Caco-2 (cell line): ENCODE measurements at regions of chr16 and their contacts with region 1.

Region 1: DNA sequence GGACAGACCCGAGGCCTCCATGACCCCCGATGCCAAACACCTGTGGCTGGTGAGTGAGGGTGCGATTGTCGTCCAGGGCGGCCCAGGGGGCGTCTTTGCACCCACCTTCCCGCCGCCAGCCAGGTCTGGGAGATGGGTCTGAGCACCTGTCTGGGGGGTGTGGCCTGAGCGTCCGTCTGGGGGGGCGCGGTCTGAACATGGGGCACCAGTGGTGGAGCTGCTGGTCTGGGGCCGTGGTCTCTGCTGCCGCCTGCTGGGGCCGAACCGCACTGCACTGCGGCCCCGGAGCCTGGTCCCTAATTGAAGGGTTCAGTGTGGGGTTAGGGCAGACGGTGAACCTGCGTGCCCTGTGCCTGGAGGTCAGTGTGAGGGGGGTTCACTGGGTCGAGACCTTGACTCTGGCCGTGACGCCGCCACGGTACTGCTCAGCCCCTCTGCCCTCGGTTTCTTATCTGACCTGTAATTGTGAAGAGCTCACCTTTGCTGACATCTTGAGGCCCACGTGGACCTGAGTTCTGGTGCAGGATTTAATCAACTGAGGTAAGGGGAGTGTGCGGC is 12.6 kb upstream of the TCF25 start:
- DNase-seq: peak; percentile 88 to 91
- H3K4me3 ChIP-seq: no peak overlapping the region
- H3K4me3 Mint-ChIP-seq: no peak overlapping the region
- H3K27ac Mint-ChIP-seq: peak overlapping the region; percentile 82
- H3K4me1 ChIP-seq: peaks cover 3% of the 10 kb centered on the region; the same call in 1 of the 2 replicates
- H3K4me1 Mint-ChIP-seq: peaks cover 21% of the 10 kb centered on the region
- H3K27me3 ChIP-seq: no peaks in the 10 kb centered on the region
- H3K27me3 Mint-ChIP-seq: no peaks in the 10 kb centered on the region
- CTCF ChIP-seq: peak; percentile 99

Region 2: GRCh38 chr16:89749647-89750046 is 111.2 kb before region 1 on chr16:
- CTCF ChIA-PET with region 1: interaction called, 4 read pairs
- POLR2A ChIA-PET with region 1: no interaction called
- intact Hi-C with region 1: loop called (anchors 2 kb)
- DNase-seq: no peak
- H3K4me3 ChIP-seq: no peak overlapping the region
- H3K4me3 Mint-ChIP-seq: no peak overlapping the region
- H3K27ac Mint-ChIP-seq: peak overlapping the region; percentile 73
- H3K4me1 ChIP-seq: no peaks in the 10 kb centered on the region
- H3K4me1 Mint-ChIP-seq: no peaks in the 10 kb centered on the region
- H3K27me3 ChIP-seq: no peaks in the 10 kb centered on the region
- H3K27me3 Mint-ChIP-seq: no peaks in the 10 kb centered on the region
- CTCF ChIP-seq: no peak

Region 3: GRCh38 chr16:89793955-89794354 is 66.9 kb before region 1 on chr16:
- CTCF ChIA-PET with region 1: interaction called, 7 read pairs
- POLR2A ChIA-PET with region 1: no interaction called
- intact Hi-C with region 1: loop called (anchors 1 kb)
- DNase-seq: no peak
- H3K4me3 ChIP-seq: no peak overlapping the region
- H3K4me3 Mint-ChIP-seq: no peak overlapping the region
- H3K27ac Mint-ChIP-seq: no peak overlapping the region
- H3K4me1 ChIP-seq: no peaks in the 10 kb centered on the region
- H3K4me1 Mint-ChIP-seq: no peaks in the 10 kb centered on the region
- H3K27me3 ChIP-seq: no peaks in the 10 kb centered on the region
- H3K27me3 Mint-ChIP-seq: no peaks in the 10 kb centered on the region
- CTCF ChIP-seq: no peak

Region 4: GRCh38 chr16:89815639-89816348 is 45.0 kb before region 1 on chr16:
- CTCF ChIA-PET with region 1: interaction called, 13 read pairs
- POLR2A ChIA-PET with region 1: no interaction called
- intact Hi-C with region 1: no loop called
- DNase-seq: peak in 1 of 2 experiments; percentile 46
- H3K4me3 ChIP-seq: peak overlapping the region; percentile 55
- H3K4me3 Mint-ChIP-seq: peak overlapping the region; percentile 78
- H3K27ac Mint-ChIP-seq: no peak overlapping the region
- H3K4me1 ChIP-seq: peaks cover 27% of the 10 kb centered on the region
- H3K4me1 Mint-ChIP-seq: peaks cover 19% of the 10 kb centered on the region
- H3K27me3 ChIP-seq: no peaks in the 10 kb centered on the region
- H3K27me3 Mint-ChIP-seq: no peaks in the 10 kb centered on the region
- CTCF ChIP-seq: no peak

Region 5: GRCh38 chr16:89822188-89823086 is 38.4 kb before region 1 on chr16:
- CTCF ChIA-PET with region 1: interaction called, 13 read pairs
- POLR2A ChIA-PET with region 1: no interaction called
- intact Hi-C with region 1: loop called (anchors 2 kb)
- DNase-seq: peak; percentile 92 to 94
- H3K4me3 ChIP-seq: no peak overlapping the region
- H3K4me3 Mint-ChIP-seq: peak overlapping the region; percentile 71
- H3K27ac Mint-ChIP-seq: peak overlapping the region; percentile 97
- H3K4me1 ChIP-seq: peaks cover 52% of the 10 kb centered on the region
- H3K4me1 Mint-ChIP-seq: peaks cover 41% of the 10 kb centered on the region
- H3K27me3 ChIP-seq: no peaks in the 10 kb centered on the region
- H3K27me3 Mint-ChIP-seq: no peaks in the 10 kb centered on the region
- CTCF ChIP-seq: no peak

Region 6: GRCh38 chr16:89837305-89837554 is 23.6 kb before region 1 on chr16:
- CTCF ChIA-PET with region 1: interaction called, 8 read pairs
- POLR2A ChIA-PET with region 1: interaction called, 4 read pairs
- intact Hi-C with region 1: loop called (anchors 2 kb)
- DNase-seq: no peak
- H3K4me3 ChIP-seq: no peak overlapping the region
- H3K4me3 Mint-ChIP-seq: peak overlapping the region; percentile 64
- H3K27ac Mint-ChIP-seq: peak overlapping the region; percentile 66
- H3K4me1 ChIP-seq: peaks cover 18% of the 10 kb centered on the region
- H3K4me1 Mint-ChIP-seq: no peaks in the 10 kb centered on the region
- H3K27me3 ChIP-seq: no peaks in the 10 kb centered on the region
- H3K27me3 Mint-ChIP-seq: no peaks in the 10 kb centered on the region
- CTCF ChIP-seq: no peak

Region 7: DNA sequence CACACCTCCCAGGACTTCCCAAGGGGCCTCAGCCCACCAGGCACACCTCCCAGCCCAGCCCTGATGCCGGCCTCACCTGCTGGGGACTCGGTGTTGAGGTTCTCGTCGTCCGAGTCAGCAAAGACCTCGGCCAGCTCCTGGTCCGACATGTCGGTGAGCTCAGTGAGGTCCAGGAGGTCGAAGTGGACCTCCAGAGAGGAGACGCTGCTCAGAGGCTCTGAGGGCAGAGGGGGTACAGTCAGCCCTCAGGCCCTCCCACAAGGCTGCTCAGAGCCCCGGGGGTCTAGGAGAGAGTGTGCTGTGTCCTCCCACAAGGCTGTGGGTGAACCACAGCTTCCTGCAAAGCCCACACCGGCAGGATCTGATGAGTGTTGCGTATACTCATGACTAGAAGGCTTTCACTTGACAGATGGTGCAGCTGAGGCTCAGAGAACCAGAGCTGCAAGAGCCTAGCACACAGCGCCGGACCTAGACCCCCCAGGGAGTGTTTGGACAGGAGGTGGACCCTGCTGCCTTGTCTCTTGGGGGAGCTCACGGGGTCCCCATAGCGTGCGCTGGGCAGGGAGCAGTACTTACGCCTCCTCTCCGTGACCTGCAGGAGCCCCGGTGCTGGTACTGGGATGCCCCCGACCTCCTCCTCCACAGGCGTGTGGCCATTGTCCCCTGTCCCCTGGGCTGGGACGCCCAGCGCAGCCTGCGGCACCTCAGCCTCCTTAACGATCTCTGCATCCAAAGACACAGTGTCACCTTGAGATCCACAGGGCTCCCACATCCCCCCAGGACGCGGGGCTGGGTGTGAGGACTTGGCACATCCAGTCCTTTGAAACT is 148.1 kb after region 1 on chr16:
- CTCF ChIA-PET with region 1: no interaction called
- POLR2A ChIA-PET with region 1: no interaction called
- intact Hi-C with region 1: no loop called
- DNase-seq: no peak
- H3K4me3 ChIP-seq: no peak overlapping the region
- H3K4me3 Mint-ChIP-seq: no peak overlapping the region
- H3K27ac Mint-ChIP-seq: no peak overlapping the region
- H3K4me1 ChIP-seq: 0 out of 2 replicates have a peak, but pooled peaks cover 7% of the 10 kb centered on the region
- H3K4me1 Mint-ChIP-seq: no peaks in the 10 kb centered on the region
- H3K27me3 ChIP-seq: no peaks in the 10 kb centered on the region
- H3K27me3 Mint-ChIP-seq: no peaks in the 10 kb centered on the region
- CTCF ChIP-seq: no peak